Sciatic nerve (tissue), 2 donors: ENCODE measurements at regions of chr5 and their contacts with region 1.

Region 1: DNA sequence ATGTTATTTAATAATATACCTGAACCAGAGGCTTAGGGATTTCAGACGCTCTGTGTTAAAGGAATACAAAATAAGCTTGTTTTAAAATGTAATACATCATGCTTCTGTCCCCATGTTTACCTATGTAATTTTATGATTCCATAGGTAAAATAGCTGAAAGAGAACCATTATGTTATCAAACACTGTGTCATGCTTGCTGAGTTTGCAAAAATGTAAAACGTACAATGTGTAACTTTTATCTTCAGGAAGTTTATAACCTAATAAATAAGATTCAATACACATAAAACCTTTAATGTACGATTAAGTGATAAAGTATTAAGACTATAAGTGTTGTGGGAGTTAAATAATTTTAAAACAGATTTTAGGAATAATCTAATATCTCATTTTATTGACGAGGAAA is 94.1 kb downstream of the COMMD10 start:
- DNase-seq: no peak
- ATAC-seq: no peak

Region 2: GRCh38 chr5:115116001-115116400 is 1062.9 kb before region 1 on chr5:
- intact Hi-C with region 1: no loop called
- DNase-seq: no peak
- ATAC-seq: no peak

Region 3: DNA sequence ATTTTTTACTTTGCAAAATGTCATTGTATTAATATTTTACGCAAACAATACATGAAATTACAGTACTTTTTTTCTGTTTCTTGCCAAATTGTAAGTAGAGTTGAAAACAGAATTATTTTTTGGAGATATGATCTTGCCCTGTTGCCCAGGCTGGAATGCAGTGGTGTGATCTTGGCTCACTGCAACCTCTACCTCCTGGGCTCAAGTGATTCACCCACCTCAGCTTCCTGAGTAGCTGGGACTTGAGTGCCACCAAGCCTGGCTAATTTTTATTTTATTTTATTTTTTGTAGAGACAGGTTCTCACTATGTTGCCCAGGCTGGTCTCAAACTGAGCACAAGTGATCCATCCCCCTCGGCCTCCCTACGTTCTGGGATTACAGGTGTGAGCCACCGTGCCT is 18.4 kb after region 1 on chr5:
- intact Hi-C with region 1: loop called (anchors 2 kb)
- DNase-seq: no peak
- ATAC-seq: no peak